Activated naive CD8-positive, alpha-beta T cell treated with anti-CD3 and anti-CD28 coated beads, Interleukin-2, amount 10 ng/mL, durations not matched to agents 7 days and 5 days (primary cell): ENCODE measurements at regions of chr3 and their contacts with region 1.

Region 1: GRCh38 chr3:17775073-17775472 is 32.6 kb upstream of the TBC1D5 start:
- DNase-seq: peak; percentile 64
- ATAC-seq: peak; percentile 46
- H3K4me3 Mint-ChIP-seq: peak overlapping the region; percentile 74
- H3K27ac Mint-ChIP-seq: peak overlapping the region; percentile 85
- H3K4me1 Mint-ChIP-seq: peaks cover 44% of the 10 kb centered on the region
- H3K27me3 Mint-ChIP-seq: peaks cover 12% of the 10 kb centered on the region

Region 2: DNA sequence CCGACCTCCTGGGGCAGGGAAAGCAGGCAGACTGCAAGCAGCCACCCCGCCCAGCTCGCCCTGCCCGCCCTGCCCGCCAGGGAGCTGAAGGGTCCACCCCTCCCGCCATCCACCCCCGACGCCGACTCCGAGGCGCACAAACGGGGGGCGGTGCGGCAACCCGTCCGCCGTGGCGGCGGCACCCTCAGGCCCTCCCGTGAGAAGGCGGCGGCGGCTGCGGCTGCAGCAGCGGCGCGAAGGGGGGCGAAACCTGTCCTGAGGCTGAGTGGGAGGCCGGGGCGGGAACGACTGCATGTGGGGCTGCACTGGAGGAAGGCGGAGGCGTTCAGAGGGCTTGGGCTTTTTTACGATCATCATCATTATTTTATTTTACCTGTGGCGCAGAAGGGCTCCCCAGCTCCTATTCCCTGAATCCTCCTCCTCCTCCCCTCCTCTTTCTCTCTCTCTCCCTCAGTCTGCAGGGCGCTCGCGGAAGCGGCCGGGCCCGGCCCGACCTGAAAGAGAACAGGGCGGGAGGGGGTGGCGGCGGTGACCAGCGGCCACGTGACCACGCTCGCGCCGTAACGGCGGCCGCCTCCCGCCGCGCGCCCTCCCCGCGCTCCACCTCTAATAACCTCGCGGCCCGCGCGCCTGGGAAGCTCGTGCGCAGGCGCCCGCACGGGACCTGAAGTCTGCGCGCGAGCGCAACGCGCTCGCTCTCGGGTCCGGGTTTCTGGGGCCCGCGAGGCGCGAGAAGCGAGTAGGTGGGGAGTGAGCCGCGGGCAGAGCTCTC is 32.8 kb before region 1 on chr3 and contains the start of gene TBC1D5:
- POLR2A ChIA-PET with region 1: interaction called, 41 read pairs
- DNase-seq: peak; percentile 93
- ATAC-seq: peak; percentile 96
- H3K4me3 Mint-ChIP-seq: peak within 1 kb of the TSS; percentile 94
- H3K27ac Mint-ChIP-seq: peak within 1 kb of the TSS; percentile 96
- H3K4me1 Mint-ChIP-seq: peaks cover 45% of the 10 kb centered on the region
- H3K27me3 Mint-ChIP-seq: no peaks in the 10 kb centered on the region
- total RNA-seq, gene TBC1D5: 57.3 to 60.9 TPM

Region 3: DNA sequence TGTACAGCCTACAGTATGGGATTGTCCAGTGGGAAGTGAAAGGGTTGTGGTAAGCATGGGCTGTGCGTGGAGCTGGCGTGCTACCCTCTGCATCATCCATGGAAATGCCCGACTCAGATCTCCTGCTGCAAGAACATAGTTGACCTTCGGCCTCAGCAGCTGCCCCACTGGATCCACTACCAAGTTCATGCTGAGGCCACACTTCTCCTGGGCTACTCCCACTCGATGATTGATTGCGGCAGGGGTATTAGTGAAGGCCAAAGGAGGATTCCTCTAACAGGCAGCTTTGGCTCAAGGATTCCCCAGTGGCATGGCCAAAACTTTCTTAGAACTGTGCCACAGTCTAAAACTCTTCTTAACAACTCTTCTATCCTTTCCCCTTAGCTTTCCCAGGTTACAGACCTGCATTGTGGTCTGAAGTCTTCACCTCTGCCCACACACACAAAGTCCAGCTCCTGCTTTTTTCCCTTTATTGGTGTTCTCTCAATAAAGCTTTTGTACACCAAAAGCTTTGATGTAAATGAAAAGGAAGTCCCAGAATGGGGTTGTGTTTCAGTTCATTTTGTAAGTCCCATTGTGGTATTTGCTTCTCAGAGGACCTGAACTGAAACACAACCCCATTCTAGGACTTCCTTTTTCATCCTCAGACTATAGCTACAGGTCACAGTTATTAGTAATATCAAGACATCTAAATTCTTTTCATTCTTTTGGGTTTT is 27.7 kb before region 1 on chr3:
- POLR2A ChIA-PET with region 1: interaction called, 41 read pairs
- DNase-seq: no peak
- ATAC-seq: no peak
- H3K4me3 Mint-ChIP-seq: peak overlapping the region; percentile 59
- H3K27ac Mint-ChIP-seq: peak overlapping the region; percentile 86
- H3K4me1 Mint-ChIP-seq: peaks cover 34% of the 10 kb centered on the region
- H3K27me3 Mint-ChIP-seq: no peaks in the 10 kb centered on the region